ENCODE measurements at regions of chr2 and their contacts with region 1.

Region 1: DNA sequence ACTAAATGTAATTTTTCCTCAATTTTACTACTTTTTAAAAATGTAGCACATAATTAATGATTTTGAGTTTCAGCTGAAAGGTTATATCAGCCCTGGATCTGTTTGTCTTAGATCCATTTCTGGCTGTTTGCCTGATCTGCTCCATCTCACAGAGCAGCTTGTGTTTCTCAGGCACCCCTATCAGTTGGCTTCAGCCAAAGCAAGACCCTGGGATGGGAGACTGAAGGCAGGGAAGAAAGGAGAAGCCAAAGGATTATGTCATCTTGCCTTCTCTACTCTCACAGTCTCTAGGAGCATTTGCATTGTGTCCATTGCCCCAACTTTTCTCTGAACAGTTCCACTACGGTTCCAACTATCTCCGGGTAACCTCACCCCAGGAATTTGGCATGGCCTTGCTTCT is 110.5 kb downstream of the CCDC148 start:
- DNase-seq: no peak
- H3K4me3 ChIP-seq: no peak overlapping the region
- H3K27ac ChIP-seq: no peak overlapping the region
- H3K4me1 ChIP-seq: no peaks in the 10 kb centered on the region
- H3K27me3 ChIP-seq: peaks cover 2% of the 10 kb centered on the region in 2 experiments
- CTCF ChIP-seq: no peak
- POLR2A ChIP-seq: no peak

Region 2: GRCh38 chr2:158142568-158143332 is 203.3 kb before region 1 on chr2:
- CTCF ChIA-PET with region 1: no interaction called
- POLR2A ChIA-PET with region 1: no interaction called
- dilution Hi-C with region 1: no loop called
- intact Hi-C with region 1: no loop called
- DNase-seq: no peak
- H3K4me3 ChIP-seq: no peak overlapping the region
- H3K27ac ChIP-seq: no peak overlapping the region
- H3K4me1 ChIP-seq: no peaks in the 10 kb centered on the region
- H3K27me3 ChIP-seq: peaks cover 1 to 4% of the 10 kb centered on the region in 2 experiments
- CTCF ChIP-seq: no peak
- POLR2A ChIP-seq: no peak

Region 3: DNA sequence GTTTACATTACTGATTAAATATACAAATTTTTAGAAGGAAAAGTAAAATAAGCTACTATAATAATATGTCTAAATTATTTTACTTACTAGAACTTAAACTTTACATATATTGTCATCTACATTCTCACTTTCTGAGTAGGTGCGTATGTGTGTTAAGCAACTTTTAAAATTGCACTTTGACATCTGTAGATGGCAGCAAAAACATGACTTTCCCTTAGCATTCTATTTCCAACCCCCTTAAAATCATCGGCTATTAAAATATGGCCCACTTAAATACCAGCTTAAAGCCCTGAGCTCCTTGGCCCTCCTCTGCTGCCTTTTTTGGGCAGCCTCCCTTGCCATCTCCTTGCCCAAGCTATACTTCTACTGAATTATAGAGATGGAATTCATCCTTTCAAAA is 166.4 kb before region 1 on chr2:
- CTCF ChIA-PET with region 1: no interaction called
- POLR2A ChIA-PET with region 1: no interaction called
- dilution Hi-C with region 1: no loop called
- intact Hi-C with region 1: loop called (anchors 10 kb)
- DNase-seq: peak; percentile 48
- H3K4me3 ChIP-seq: no peak overlapping the region
- H3K27ac ChIP-seq: no peak overlapping the region
- H3K4me1 ChIP-seq: no peaks in the 10 kb centered on the region
- H3K27me3 ChIP-seq: peaks cover 14 to 22% of the 10 kb centered on the region in 2 experiments
- CTCF ChIP-seq: peak in 1 of 2 donors; percentile 27
- POLR2A ChIP-seq: no peak

Region 4: DNA sequence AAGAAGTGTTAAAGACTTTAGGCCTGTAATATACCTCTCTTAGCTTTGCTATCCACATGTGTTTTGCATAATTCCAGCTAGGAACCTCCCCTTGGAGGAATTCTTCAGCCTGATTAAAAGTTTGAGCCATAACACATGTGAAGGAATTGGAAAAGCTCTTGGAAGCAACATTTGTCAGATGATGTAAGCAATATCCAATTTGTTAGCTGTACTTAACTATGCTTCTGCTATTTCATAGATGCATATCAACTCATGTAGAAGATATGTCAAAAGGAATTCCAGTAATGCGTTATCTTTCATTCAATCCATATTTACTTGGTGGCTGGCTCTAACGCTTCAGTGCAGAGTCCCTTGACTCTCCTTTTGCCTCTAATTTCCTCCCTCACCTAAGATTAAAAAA is 156.9 kb after region 1 on chr2:
- CTCF ChIA-PET with region 1: no interaction called
- POLR2A ChIA-PET with region 1: no interaction called
- dilution Hi-C with region 1: no loop called
- intact Hi-C with region 1: no loop called
- DNase-seq: peak; percentile 22
- H3K4me3 ChIP-seq: no peak overlapping the region
- H3K27ac ChIP-seq: no peak overlapping the region
- H3K4me1 ChIP-seq: no peaks in the 10 kb centered on the region
- H3K27me3 ChIP-seq: no peaks in the 10 kb centered on the region
- CTCF ChIP-seq: no peak
- POLR2A ChIP-seq: no peak